Activated T-helper 1 cell treated with anti-CD3 and anti-CD28 coated beads, Interleukin-12 subunit alpha, Interleukin-12 subunit beta, Interleukin-2, Interleukin-4 antibody, amounts not matched to agents 30 ng/mL and 10 ng/mL and 1 ng/mL, durations not matched to agents 14 hours and 24 hours and 36 hours (primary cell): ENCODE measurements at regions of chr4 and their contacts with region 1.

Region 1: GRCh38 chr4:2536193-2537010 is at the start of gene FAM193A:
- DNase-seq: peak; percentile 99
- H3K4me3 Mint-ChIP-seq: peak within 1 kb of the TSS; percentile 92
- H3K27ac Mint-ChIP-seq: peak within 1 kb of the TSS; percentile 97
- H3K4me1 Mint-ChIP-seq: peaks cover 11% of the 10 kb centered on the region
- H3K27me3 Mint-ChIP-seq: peaks cover 4% of the 10 kb centered on the region
- total RNA-seq, gene FAM193A: 30.4 and 32.2 TPM in 2 replicates

Region 2: GRCh38 chr4:1712216-1713002 is 824.0 kb before region 1 on chr4 and contains the start of gene SLBP:
- intact Hi-C with region 1: loop called (anchors 1 kb)
- DNase-seq: peak; percentile 99
- H3K4me3 Mint-ChIP-seq: peak within 1 kb of the TSS; percentile 99
- H3K27ac Mint-ChIP-seq: peak within 1 kb of the TSS; percentile 89
- H3K4me1 Mint-ChIP-seq: peaks cover 59% of the 10 kb centered on the region
- H3K27me3 Mint-ChIP-seq: no peaks in the 10 kb centered on the region
- total RNA-seq, gene SLBP: 136 and 140 TPM in 2 replicates

Region 3: DNA sequence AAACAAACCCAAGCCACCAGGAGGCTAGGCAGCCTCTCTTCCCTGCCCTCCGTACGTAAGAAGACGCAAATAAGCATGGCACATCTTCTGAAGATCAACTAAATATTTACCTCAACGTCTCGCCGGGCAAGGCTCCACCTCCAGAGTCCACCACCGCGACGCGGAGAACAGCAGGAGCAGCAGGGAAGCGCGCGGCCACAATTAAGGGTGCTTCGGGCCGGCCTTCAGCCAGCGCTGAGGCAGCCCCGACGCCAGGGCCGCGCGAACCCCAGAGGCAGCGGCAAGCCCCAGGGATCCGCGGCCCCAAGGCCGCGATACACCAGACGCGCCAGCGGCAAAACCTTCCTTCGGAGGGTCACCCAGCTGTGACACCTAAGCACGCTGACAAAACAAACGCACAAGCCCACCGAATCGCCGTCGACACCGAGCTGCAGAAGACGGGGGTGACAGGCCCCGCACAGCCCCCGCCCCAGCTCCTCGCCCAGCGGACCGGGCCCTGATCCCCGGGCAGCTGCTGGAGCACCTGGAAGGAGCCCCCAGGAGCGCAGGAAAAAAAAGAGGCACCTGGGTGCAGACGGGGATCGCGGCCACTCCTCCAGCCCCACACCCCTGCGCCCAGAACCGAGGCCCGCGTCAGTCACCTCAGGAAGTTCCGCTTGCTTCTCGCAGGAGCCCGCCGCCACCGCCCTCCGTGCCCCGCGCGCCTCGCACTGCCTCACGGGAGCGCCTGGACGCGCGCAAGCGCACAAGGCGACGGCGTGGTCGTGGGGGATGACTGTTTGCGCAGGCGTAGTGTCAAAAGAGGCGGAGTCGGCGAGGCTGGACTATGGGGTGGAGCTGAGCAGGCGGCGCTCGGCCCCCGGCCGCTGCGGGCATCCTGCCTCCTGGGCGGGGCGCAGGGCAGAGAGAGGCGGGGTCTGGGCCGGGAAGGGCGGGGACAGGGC is 294.7 kb before region 1 on chr4 and contains the starts of genes HAUS3 and POLN:
- intact Hi-C with region 1: loop called (anchors 1 kb)
- DNase-seq: peak; percentile 100
- H3K4me3 Mint-ChIP-seq: peak within 1 kb of the TSS; percentile 85
- H3K27ac Mint-ChIP-seq: peak within 1 kb of the TSS; percentile 90
- H3K4me1 Mint-ChIP-seq: peaks cover 53% of the 10 kb centered on the region
- H3K27me3 Mint-ChIP-seq: peaks cover 2% of the 10 kb centered on the region
- total RNA-seq, gene HAUS3: 19.2 and 19.9 TPM in 2 replicates
- total RNA-seq, gene POLN: 2.1 and 3.5 TPM in 2 replicates

Region 4: DNA sequence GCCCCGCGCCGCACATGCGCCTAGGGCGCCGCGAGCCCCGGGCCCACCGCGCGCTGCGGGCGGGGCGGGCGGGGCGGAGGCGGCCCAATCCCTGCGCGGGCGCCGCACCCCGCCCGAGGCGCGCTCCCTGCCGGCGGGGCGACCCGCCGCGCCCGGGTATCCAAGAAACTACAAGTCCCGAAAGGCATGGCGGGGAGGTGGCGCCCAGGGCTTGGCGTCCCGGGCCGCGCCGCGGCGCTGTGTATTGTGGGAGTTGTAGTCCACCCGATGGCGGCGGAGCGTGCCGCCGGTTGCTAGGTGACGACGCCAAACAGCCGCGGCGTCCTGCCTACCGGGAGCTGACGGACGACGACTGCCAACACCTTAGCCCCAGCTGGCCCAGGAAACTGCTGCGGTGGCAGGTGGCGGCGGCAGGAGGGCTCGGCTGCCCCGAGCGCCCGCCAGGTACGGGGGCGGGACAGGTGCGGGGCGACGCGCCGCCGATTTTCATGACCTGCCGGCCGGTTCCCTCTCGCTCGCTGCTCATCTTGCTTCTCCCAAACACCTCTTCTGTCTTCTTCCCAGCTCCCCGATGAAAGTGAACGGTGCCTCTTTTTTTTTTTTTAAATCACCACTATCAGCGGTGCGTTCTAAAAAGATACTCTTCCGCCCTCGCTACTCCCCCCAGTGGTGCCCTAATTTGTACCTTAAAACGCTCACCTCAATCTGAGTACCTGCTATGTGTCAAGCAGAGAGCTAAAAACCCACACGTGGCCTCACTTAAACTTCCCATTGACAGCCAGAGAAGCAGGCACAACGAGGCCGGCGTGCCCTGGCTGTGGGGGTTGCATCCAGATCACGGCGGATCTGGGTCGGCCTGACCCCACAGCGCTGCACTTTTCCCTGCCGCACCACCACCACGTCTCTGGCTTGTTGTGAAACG is 117.5 kb before region 1 on chr4 and contains the start of gene CFAP99:
- intact Hi-C with region 1: loop called (anchors 1 kb)
- DNase-seq: peak; percentile 94
- H3K4me3 Mint-ChIP-seq: peak within 1 kb of the TSS; percentile 85
- H3K27ac Mint-ChIP-seq: peak within 1 kb of the TSS; percentile 82
- H3K4me1 Mint-ChIP-seq: peaks cover 39% of the 10 kb centered on the region
- H3K27me3 Mint-ChIP-seq: peaks cover 55% of the 10 kb centered on the region
- total RNA-seq, gene CFAP99: not detected in 2 replicates

Region 5: DNA sequence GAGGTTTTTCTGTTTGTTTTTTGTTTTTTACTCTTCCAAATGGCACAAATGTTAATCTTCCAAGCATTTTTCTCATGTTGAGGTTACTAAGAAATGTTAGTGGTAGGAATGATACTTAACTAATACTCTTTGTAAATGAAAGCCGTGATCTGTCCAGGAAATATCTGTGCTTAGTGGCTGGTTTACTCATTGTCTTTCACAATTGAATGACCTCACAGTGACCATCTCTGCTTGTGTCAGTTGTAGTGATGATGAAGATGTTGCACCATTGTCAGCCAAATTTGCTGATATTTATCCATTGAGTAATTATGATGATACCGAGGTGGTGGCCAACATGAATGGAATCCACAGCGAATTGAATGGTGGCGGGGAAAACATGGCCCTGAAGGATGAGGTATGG is 126.2 kb after region 1 on chr4:
- intact Hi-C with region 1: loop called (anchors 5 kb)
- DNase-seq: no peak
- H3K4me3 Mint-ChIP-seq: no peak overlapping the region
- H3K27ac Mint-ChIP-seq: no peak overlapping the region
- H3K4me1 Mint-ChIP-seq: peaks cover 16% of the 10 kb centered on the region
- H3K27me3 Mint-ChIP-seq: no peaks in the 10 kb centered on the region

Region 6: GRCh38 chr4:2843263-2843940 is 307.0 kb after region 1 on chr4 and contains the start of gene ADD1:
- intact Hi-C with region 1: loop called (anchors 1 kb)
- DNase-seq: peak; percentile 97
- H3K4me3 Mint-ChIP-seq: peak within 1 kb of the TSS; percentile 95
- H3K27ac Mint-ChIP-seq: peak within 1 kb of the TSS; percentile 92
- H3K4me1 Mint-ChIP-seq: peaks cover 49% of the 10 kb centered on the region
- H3K27me3 Mint-ChIP-seq: no peaks in the 10 kb centered on the region
- total RNA-seq, gene ADD1: 200 and 203 TPM in 2 replicates

Region 7: GRCh38 chr4:2963175-2963965 is 427.0 kb after region 1 on chr4 and contains the starts of genes GRK4 and NOP14:
- intact Hi-C with region 1: loop called (anchors 1 kb)
- DNase-seq: peak; percentile 96
- H3K4me3 Mint-ChIP-seq: peak within 1 kb of the TSS; percentile 97
- H3K27ac Mint-ChIP-seq: peak within 1 kb of the TSS; percentile 92
- H3K4me1 Mint-ChIP-seq: peaks cover 28% of the 10 kb centered on the region
- H3K27me3 Mint-ChIP-seq: no peaks in the 10 kb centered on the region
- total RNA-seq, gene GRK4: 4.4 and 4.5 TPM in 2 replicates
- total RNA-seq, gene NOP14: 140 and 142 TPM in 2 replicates